CD8-positive, alpha-beta T cell (primary cell): ENCODE measurements at regions of chr12 and their contacts with region 1.

Region 1: DNA sequence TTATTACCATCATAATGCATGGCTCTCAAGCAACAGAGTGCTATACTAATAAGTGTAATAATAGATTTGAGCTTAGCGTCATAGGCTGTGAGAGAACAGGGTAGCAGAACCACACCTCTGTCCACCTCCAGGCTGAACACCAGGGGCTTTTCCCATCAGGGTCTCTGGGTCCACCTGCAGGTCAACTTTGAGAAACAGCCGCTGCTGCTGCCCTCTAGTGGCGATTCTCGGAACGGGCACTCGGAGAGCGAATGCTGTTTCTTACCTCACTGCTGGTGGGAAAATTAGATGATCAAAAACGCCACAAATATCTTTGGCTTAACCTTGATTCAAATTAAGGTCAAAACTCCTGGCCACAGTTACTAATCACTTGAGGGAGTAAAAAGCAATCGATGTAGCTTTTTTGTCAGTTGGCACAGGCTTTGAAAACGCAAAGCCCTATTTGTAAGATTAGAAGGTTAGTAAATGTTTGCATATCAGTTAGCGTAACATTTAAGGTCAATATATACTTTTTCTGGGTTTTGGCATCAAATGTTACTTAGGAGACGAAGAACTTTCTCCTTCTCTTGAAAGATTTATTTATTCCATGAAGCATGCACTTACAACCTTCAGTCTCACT is 127.9 kb upstream of the TMEM132D start:
- DNase-seq: peak; percentile 21 to 70 (median 48)
- ATAC-seq: no peak
- H3K4me3 ChIP-seq: no peak overlapping the region
- H3K4me3 Mint-ChIP-seq: no peak overlapping the region
- H3K27ac ChIP-seq: no peak overlapping the region
- H3K27ac Mint-ChIP-seq: no peak overlapping the region
- H3K4me1 ChIP-seq: no peaks in the 10 kb centered on the region
- H3K4me1 Mint-ChIP-seq: no peaks in the 10 kb centered on the region
- H3K27me3 ChIP-seq: no peaks in the 10 kb centered on the region
- H3K27me3 Mint-ChIP-seq: peaks cover 18% of the 10 kb centered on the region
- CTCF ChIP-seq: peak; percentile 91

Region 2: GRCh38 chr12:128531170-128531569 is 1500.5 kb before region 1 on chr12:
- CTCF ChIA-PET with region 1: no interaction called
- POLR2A ChIA-PET with region 1: no interaction called
- intact Hi-C with region 1: loop called in 1 of 2 experiments (anchors 5 kb)
- DNase-seq: peak in 2 of 9 experiments; percentile 15 to 23
- ATAC-seq: no peak
- H3K4me3 ChIP-seq: no peak overlapping the region
- H3K4me3 Mint-ChIP-seq: no peak overlapping the region
- H3K27ac ChIP-seq: no peak overlapping the region
- H3K27ac Mint-ChIP-seq: no peak overlapping the region
- H3K4me1 ChIP-seq: no peaks in the 10 kb centered on the region
- H3K4me1 Mint-ChIP-seq: peaks cover 10% of the 10 kb centered on the region
- H3K27me3 ChIP-seq: no peaks in the 10 kb centered on the region
- H3K27me3 Mint-ChIP-seq: no peaks in the 10 kb centered on the region
- CTCF ChIP-seq: no peak

Region 3: GRCh38 chr12:130017591-130018062 is 14.1 kb before region 1 on chr12:
- CTCF ChIA-PET with region 1: interaction called, 20 read pairs
- POLR2A ChIA-PET with region 1: no interaction called
- intact Hi-C with region 1: no loop called
- DNase-seq: no peak
- ATAC-seq: no peak
- H3K4me3 ChIP-seq: no peak overlapping the region
- H3K4me3 Mint-ChIP-seq: no peak overlapping the region
- H3K27ac ChIP-seq: no peak overlapping the region
- H3K27ac Mint-ChIP-seq: no peak overlapping the region
- H3K4me1 ChIP-seq: no peaks in the 10 kb centered on the region
- H3K4me1 Mint-ChIP-seq: no peaks in the 10 kb centered on the region
- H3K27me3 ChIP-seq: no peaks in the 10 kb centered on the region
- H3K27me3 Mint-ChIP-seq: peaks cover 8% of the 10 kb centered on the region
- CTCF ChIP-seq: no peak